ENCODE measurements at regions of chr5 and their contacts with region 1.

Region 1: DNA sequence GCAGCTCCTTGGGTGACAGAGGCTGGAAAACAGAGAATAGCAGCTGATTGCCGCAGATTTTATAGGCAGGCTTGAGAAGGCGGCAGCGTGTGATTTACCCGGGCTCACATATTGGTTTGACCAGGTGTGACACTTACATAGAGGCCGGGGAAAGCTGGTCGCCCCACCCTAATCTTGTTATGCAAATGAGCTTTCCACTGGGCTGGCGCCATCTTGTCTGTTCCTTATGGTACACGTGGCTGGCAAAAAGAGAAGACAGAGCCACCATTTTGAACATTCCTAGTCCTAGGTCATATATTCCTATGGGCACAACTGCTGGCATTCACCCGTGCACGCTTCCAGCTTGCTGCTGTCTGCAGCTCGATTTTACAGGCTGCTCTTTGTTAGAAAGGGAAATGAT is 11.3 kb upstream of the SPZ1 start:
- DNase-seq: no peak
- H3K4me3 ChIP-seq: no peak overlapping the region
- H3K27ac ChIP-seq: no peak overlapping the region
- H3K4me1 ChIP-seq: no peaks in the 10 kb centered on the region
- H3K27me3 ChIP-seq: no peaks in the 10 kb centered on the region
- CTCF ChIP-seq: no peak
- EP300 ChIP-seq: no peak
- POLR2A ChIP-seq: no peak

Region 2: DNA sequence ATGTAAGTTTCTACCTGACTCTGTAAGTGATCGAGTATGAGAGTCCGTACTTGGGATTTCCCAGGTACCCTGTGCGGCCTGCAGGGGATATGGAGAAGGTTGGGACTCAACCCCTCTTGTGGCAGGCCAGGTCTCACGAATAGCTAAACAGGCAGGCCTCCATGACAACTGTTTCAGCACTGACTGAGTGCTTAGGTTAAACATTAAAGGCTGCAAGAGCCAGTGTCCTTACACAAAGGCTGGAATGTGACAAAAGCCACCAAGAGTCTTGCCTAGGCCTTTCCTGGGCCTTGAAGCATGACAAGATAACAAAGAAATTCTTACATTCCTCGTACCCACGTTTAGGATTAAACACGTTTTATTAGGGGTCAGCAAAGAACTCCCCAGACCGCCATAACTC is 214.7 kb before region 1 on chr5:
- intact Hi-C with region 1: loop called (anchors 5 kb)
- DNase-seq: peak in 1 of 2 donors; percentile 58
- H3K4me3 ChIP-seq: no peak overlapping the region
- H3K27ac ChIP-seq: no peak overlapping the region
- H3K4me1 ChIP-seq: peaks cover 0 to 22% (median 0%) of the 10 kb centered on the region in 4 donors
- H3K27me3 ChIP-seq: no peaks in the 10 kb centered on the region
- CTCF ChIP-seq: no peak
- EP300 ChIP-seq: no peak
- POLR2A ChIP-seq: no peak

Measured in stomach (tissue), 19 donors.